Colonic mucosa (tissue), 4 donors: ENCODE measurements at regions of chr5 and their contacts with region 1.

Region 1: GRCh38 chr5:118987988-118988865 is at the start of gene DTWD2:
- DNase-seq: peak; percentile 96
- H3K4me3 ChIP-seq: peak within 1 kb of the TSS; percentile 58
- H3K27ac ChIP-seq: peak within 1 kb of the TSS; percentile 91
- H3K4me1 ChIP-seq: no peaks in the 10 kb centered on the region
- H3K27me3 ChIP-seq: no peaks in the 10 kb centered on the region
- CTCF ChIP-seq: peak; percentile 94
- total RNA-seq, gene DTWD2: 7.5 to 11.7 TPM

Region 2: DNA sequence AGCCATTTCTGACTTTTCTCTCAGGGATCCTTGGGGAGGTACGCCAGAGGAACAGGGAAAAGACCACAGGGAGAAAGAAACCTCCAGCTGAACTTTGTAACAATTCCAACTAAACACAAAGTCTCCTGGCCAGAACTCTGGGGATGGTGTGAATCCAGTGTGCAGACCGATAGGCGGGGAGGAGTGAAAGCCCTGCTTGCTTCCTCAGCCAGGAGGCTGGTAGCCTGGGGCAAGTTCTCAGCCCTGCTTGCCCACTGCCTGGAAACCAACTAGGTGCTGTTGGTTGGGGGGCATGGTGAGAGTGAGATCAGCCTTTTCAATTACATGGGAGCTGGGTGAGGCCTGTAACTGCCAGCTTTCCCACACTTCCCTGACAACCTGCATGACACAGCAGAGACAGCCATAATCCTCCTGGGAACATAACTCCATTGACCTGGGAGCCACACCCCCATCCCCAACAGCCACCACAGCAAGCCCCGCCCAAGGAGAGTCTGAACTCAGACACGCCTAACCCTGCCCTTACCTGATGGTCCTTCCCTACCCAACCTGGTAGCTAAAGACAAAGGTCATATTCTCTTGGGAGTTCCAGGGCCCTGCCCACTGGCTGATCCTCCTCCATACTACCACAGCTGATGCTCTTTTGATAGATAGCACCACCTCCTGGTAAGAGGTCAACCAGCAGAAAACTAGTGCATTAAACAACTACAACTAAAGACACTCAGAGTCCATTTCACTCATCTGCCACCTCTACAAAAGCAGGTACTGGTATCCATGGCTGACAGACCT is 267.5 kb after region 1 on chr5:
- intact Hi-C with region 1: loop called (anchors 5 kb)
- DNase-seq: peak; percentile 87
- H3K4me3 ChIP-seq: no peak overlapping the region
- H3K27ac ChIP-seq: peak overlapping the region; percentile 65
- H3K4me1 ChIP-seq: no peaks in the 10 kb centered on the region
- H3K27me3 ChIP-seq: no peaks in the 10 kb centered on the region
- CTCF ChIP-seq: peak; percentile 36

Region 3: DNA sequence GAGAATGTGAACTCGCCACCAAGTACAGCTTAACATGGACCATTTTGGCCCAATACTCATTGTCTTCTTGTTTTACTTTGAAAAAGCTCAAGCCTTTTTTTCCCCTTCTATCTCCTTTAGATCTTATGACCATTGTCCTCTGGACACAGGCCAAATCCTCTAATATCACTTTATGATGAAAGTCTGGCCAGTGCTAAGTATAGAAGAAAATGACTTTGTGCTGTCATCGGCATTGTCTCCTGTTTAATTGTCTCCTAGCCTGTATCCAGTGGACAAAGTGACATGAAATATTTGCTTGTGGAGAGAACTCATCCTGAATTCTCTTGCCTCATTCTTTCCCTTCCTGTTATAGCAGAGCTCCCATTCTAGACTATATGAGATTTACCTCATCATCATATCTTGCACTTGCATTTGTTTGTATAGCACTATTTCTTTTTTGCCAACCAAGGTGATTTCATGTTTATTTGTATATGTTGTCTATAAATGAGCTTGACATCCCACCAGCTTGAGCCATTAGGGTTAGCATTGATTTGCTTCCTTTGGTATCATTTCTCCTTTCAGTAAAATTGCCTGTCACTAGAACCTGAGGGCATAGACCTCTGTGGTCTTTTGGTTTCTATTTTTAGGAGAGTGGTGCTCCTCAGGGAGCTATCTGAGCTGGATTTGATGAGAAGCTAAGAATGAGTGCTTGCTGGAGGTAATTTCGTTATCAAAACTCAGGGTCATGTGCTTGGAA is 348.8 kb after region 1 on chr5:
- intact Hi-C with region 1: loop called (anchors 5 kb)
- DNase-seq: no peak
- H3K4me3 ChIP-seq: no peak overlapping the region
- H3K27ac ChIP-seq: peak overlapping the region; percentile 8
- H3K4me1 ChIP-seq: no peaks in the 10 kb centered on the region
- H3K27me3 ChIP-seq: no peaks in the 10 kb centered on the region
- CTCF ChIP-seq: no peak

Region 4: DNA sequence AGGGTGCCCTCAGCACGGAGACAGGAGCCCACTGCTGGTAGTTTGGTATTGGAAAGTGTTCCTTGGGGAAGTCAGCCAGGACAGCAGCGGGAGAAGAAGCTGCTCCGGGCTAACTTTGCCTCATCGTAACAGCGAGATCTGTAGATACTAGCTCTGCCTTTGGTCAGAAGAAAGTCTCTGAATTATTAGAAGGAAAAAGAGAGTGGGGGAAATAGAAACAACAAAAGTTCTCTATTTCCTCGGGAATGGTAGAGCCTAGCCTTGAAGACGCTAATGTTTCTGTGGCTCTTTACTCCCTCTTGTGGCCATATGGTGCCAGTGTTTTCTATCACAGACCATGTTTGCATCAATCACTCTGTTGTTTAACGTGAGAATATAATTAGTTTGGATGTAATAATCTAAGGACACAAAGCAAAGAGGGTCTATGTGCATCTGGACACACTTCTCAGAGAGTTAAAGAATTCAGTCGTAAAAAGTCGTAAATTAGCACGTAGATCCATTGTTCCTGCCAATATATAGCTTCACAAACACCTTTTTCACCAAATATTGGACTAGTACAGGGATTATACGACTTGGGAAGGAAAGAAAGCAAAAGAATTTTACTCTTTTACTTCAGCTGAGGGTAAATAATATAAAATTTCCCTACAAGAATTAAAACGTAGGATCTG is 423.8 kb after region 1 on chr5:
- intact Hi-C with region 1: loop called (anchors 5 kb)
- DNase-seq: peak; percentile 76
- H3K4me3 ChIP-seq: peak overlapping the region; percentile 36
- H3K27ac ChIP-seq: peak overlapping the region; percentile 45
- H3K4me1 ChIP-seq: no peaks in the 10 kb centered on the region
- H3K27me3 ChIP-seq: no peaks in the 10 kb centered on the region
- CTCF ChIP-seq: peak; percentile 88